AG04449 (cell line): ENCODE measurements at regions of chr19 and their contacts with region 1.

Region 1: GRCh38 chr19:16714702-16715287 is 4.9 kb upstream of the NWD1 start:
- DNase-seq: no peak
- H3K4me3 ChIP-seq: no peak overlapping the region
- CTCF ChIP-seq: peak; percentile 80

Region 2: GRCh38 chr19:16726916-16727315 is 12.1 kb after region 1 on chr19:
- CTCF ChIA-PET with region 1: interaction called, 11 read pairs
- POLR2A ChIA-PET with region 1: no interaction called
- DNase-seq: no peak
- H3K4me3 ChIP-seq: no peak overlapping the region
- CTCF ChIP-seq: no peak